AG04450 (cell line): ENCODE measurements at regions of chr16 and their contacts with region 1.

Region 1: DNA sequence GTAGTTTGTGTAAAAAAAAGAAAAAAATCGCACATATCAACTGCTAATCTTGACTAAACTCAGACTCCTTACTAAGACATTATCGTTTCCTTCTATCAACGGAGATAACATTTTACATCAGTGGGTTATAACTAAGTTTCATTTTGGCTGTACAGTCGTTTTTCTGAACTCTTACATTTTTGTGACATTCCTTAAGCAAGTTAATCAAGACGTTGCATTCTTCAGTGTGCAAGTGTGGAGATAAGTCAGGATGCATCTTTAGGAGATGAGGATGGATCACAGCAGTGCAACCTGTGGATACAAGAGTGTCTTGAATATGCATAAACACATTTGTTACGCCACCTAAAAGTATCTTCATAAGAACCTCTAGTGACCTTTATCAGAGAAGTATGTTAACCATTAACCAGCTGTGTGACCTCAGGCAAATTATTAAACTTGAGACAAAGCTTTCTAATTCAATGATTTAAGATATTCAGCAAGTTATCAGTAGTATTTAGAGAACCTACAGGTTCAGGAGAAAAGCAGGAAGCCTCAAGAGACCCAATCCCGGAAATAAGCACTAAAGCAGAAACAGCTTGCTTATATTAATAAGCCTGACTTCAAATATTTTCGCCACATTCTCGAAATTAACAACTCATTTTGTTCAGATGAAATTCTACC is 9.4 kb downstream of the CMC2 start:
- DNase-seq: no peak
- H3K4me3 ChIP-seq: no peak overlapping the region
- H3K27ac ChIP-seq: no peak overlapping the region
- H3K27me3 ChIP-seq: no peaks in the 10 kb centered on the region
- CTCF ChIP-seq: no peak

Region 2: DNA sequence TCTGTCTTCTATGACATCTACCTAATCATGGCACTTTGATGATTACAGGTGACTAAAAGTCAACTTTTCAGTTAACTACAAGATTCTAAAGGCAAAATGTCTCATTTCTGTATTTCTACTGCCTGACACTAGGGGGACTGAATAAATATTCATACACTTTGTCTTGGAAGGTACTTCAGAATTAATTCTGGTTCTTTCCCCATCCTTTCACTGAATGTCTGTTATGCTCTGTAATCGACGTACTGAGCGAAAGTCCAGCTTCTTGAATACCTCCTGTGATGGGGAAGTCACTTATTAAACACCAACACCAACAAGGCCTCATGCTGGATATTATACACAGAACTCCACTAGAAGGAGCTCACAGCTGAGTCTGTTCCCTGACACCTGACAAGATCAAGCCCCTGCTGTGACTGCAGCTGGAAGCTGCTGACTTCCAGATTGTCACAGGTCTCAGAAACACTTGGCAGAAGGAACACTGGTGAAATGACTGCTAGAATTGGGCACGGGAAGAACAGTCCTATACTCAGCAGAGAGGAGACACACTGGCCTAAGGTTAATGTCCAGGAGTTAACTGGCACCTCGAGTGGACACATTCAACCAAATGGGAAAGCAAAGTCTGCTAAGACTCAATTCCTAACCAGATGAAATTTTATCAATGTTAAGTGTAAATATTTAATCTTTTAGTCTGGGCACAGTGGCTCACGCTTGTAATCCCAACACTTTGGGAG is 22.5 kb before region 1 on chr16:
- CTCF ChIA-PET with region 1: interaction called, 11 read pairs
- POLR2A ChIA-PET with region 1: interaction called, 4 read pairs
- DNase-seq: no peak
- H3K4me3 ChIP-seq: no peak overlapping the region
- H3K27ac ChIP-seq: no peak overlapping the region
- H3K27me3 ChIP-seq: no peaks in the 10 kb centered on the region
- CTCF ChIP-seq: peak; percentile 54